ENCODE measurements at regions of chr3 and their contacts with region 1.

Region 1: DNA sequence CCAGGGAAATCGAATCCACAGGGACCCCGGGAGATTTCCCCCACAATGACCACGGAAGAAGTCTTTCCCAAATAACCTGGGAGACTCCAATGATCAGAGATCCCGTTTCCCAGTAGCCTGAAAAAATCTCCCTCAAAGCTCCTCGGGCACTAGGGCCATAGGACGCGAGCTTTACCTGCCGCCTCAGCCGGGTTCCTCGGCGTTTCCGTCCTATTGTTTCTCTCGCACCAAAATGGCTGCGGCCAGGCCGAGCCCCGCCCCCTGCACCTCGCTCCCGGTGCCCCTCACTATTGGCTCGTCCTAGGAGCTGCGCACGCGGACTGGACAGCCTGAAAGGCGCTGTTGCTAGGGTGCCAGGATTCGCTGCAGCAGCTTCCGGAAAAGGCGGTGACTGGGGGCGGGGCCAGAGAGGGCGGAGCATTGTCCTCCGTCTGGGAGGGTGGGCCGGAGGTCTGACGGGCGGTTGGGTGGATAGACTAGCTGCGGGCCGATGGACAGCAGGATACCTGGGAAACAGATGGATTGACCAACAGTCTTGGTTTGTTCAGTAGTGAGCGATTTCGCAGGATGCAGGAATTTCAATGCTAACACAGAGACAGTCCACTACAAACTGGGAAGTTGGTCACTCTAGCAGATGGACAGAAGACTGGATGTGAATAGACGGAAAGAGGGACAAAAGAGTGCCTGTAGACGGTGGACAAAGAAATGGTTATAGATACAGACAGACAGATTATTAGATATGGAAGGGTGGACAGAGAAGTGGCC is at the start of gene IP6K2:
- DNase-seq: peak; percentile 97 to 100
- H3K4me3 ChIP-seq: peak within 1 kb of the TSS; percentile 94 to 100 (median 97)
- H3K27ac ChIP-seq: peak within 1 kb of the TSS; percentile 98
- H3K4me1 ChIP-seq: peaks cover 0 to 11% (median 3%) of the 10 kb centered on the region in 4 experiments; a peak in 5 of 7 replicates
- H3K27me3 ChIP-seq: no peaks in the 10 kb centered on the region
- CTCF ChIP-seq: no peak
- EP300 ChIP-seq: no peak
- POLR2A ChIP-seq: peak; percentile 89
- RAD21 ChIP-seq: no peak
- total RNA-seq, gene IP6K2: 89.4 and 95.8 TPM in 2 replicates

Region 2: DNA sequence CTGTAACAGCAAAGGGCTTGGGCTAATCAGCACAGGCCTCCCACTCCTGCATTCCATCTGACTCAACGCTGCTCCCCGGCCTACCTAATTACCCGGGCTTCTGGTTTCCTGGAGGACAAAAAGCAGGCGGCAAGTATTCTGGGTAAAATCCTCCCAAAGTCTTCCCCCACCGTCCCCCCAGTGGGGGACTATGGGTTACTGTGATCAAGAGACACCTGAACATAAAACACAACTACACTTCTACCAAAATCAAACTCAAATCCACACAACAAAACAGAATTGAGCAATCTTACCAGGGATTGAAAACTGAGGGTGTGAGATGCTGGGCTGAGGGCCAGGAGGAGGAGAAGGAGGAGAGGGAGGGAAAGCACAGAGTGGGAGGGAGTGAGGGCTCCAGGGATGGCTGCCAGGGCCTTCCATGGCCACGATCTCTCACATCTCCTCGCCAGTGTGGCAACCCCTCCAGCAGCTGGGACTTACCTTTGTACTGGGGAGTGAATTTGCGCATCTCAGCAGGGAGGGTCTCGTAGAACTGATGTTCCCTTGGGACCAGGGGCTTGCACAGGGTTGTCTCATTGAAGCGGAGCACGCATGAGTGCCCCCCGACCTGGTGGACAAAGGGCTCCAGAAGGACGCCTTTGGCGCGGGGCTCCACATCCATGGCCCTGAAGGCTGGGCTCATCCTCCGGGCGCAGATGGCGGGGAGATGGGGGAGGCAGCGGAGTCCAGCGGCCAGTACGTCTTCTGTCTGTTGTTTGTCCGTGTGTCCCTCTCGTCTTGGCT is 22.4 kb before region 1 on chr3:
- CTCF ChIA-PET with region 1: no interaction called
- POLR2A ChIA-PET with region 1: interaction called, 187 read pairs
- DNase-seq: no peak
- H3K4me3 ChIP-seq: peak overlapping the region in 3 of 4 experiments; percentile 12 to 36 (median 20); a peak in 5 of 8 replicates
- H3K27ac ChIP-seq: peak overlapping the region; percentile 69
- H3K4me1 ChIP-seq: peaks cover 6 to 7% (median 6%) of the 10 kb centered on the region in 4 experiments
- H3K27me3 ChIP-seq: no peaks in the 10 kb centered on the region
- CTCF ChIP-seq: no peak
- EP300 ChIP-seq: no peak
- POLR2A ChIP-seq: no peak
- RAD21 ChIP-seq: no peak

Region 3: GRCh38 chr3:48727511-48727910 is 10.3 kb after region 1 on chr3:
- CTCF ChIA-PET with region 1: interaction called, 4 read pairs
- POLR2A ChIA-PET with region 1: interaction called, 28 read pairs
- DNase-seq: no peak
- H3K4me3 ChIP-seq: no peak overlapping the region
- H3K27ac ChIP-seq: no peak overlapping the region
- H3K4me1 ChIP-seq: no peaks in the 10 kb centered on the region
- H3K27me3 ChIP-seq: no peaks in the 10 kb centered on the region
- CTCF ChIP-seq: no peak
- EP300 ChIP-seq: no peak
- POLR2A ChIP-seq: no peak
- RAD21 ChIP-seq: no peak

Region 4: GRCh38 chr3:48918388-48919214 is 201.4 kb after region 1 on chr3 and contains the start of gene ARIH2:
- CTCF ChIA-PET with region 1: no interaction called
- POLR2A ChIA-PET with region 1: interaction called, 12 read pairs
- DNase-seq: peak; percentile 68 to 90
- H3K4me3 ChIP-seq: peak within 1 kb of the TSS; percentile 65 to 97 (median 88)
- H3K27ac ChIP-seq: peak within 1 kb of the TSS; percentile 75
- H3K4me1 ChIP-seq: peaks cover 0 to 3% (median 1%) of the 10 kb centered on the region in 4 experiments; a peak in 2 of 7 replicates
- H3K27me3 ChIP-seq: no peaks in the 10 kb centered on the region
- CTCF ChIP-seq: 0 out of 4 replicates have a peak, but pooled peaks of 1 of the 3 experiments have one; percentile 1
- EP300 ChIP-seq: no peak
- POLR2A ChIP-seq: peak in 1 of 2 experiments; percentile 88; a peak in 2 of 3 replicates
- RAD21 ChIP-seq: peak in 1 of 2 experiments; percentile 9; a peak in 1 of 4 replicates
- total RNA-seq, gene ARIH2: 121 and 136 TPM in 2 replicates

Region 5: GRCh38 chr3:49021813-49022687 is 304.9 kb after region 1 on chr3 and contains the start of gene NDUFAF3:
- CTCF ChIA-PET with region 1: no interaction called
- POLR2A ChIA-PET with region 1: interaction called, 15 read pairs
- DNase-seq: peak; percentile 82 to 98
- H3K4me3 ChIP-seq: peak within 1 kb of the TSS; percentile 84 to 97 (median 95)
- H3K27ac ChIP-seq: peak within 1 kb of the TSS; percentile 91
- H3K4me1 ChIP-seq: peaks cover 0 to 21% (median 13%) of the 10 kb centered on the region in 4 experiments; a peak in 6 of 7 replicates
- H3K27me3 ChIP-seq: no peaks in the 10 kb centered on the region; a peak in 1 of 7 replicates
- CTCF ChIP-seq: peak in 2 of 3 experiments; percentile 87 to 96; a peak in 3 of 4 replicates
- EP300 ChIP-seq: no peak; a peak in 1 of 3 replicates
- POLR2A ChIP-seq: peak in 1 of 2 experiments; percentile 88; a peak in 2 of 3 replicates
- RAD21 ChIP-seq: peak; percentile 25 to 41; a peak in 3 of 4 replicates
- total RNA-seq, gene NDUFAF3: 26.2 and 27.8 TPM in 2 replicates